HCT116 (cell line): ENCODE measurements at regions of chr11 and their contacts with region 1.

Region 1: DNA sequence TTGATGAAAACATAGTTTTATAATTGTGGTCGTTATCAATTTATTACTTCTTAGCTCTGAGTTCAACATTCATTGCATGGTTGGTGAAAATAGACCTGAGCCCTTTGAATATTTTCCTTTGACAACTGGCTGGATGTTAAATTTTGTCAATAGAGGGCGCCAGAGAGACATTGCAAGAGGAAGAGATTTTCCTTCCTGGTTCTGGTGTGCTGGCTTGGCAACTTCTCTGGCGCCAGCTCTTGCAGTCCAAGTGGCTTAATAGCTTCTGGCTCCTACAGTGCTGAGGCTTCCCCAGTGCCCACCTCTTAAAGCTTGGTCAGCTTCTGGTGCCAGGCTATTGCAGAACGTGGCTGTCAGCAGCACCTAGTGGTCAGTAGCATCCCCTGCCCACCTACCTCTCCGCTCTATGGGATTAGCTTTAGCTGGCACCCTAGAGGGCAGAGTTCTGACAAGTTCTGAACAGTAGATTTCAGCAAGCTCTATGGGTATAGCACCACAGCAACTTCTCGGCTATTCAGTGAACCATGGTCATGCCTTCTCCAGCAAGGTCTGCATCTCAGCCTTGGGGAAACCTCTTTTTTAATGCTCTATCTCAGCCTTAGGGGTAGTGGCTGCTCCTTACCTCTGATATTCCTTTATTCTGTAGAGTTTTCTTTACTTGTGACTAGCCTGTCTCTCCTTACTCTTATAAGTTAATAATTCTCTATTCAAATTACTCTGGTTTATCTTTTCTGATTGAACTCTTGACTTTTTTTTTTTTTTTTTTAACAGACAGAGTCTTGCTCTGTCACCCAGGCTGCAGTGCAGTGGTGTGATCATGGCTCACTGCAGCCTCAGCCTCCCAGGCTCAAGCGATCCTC is 59.4 kb downstream of the ACER3 start:
- DNase-seq: peak; percentile 60
- ATAC-seq: peak; percentile 87
- H3K4me3 ChIP-seq: no peak overlapping the region; a peak in 1 of 4 replicates
- H3K27ac ChIP-seq: no peak overlapping the region
- H3K4me1 ChIP-seq: peaks cover 7 to 17% of the 10 kb centered on the region in 2 experiments; a peak in 3 of 4 replicates
- H3K27me3 ChIP-seq: no peaks in the 10 kb centered on the region
- CTCF ChIP-seq: peak; percentile 86 to 98 (median 90)
- POLR2A ChIP-seq: no peak
- RAD21 ChIP-seq: peak; percentile 87

Region 2: GRCh38 chr11:76734456-76735420 is 185.4 kb before region 1 on chr11:
- CTCF ChIA-PET with region 1: interaction called, 64 read pairs
- POLR2A ChIA-PET with region 1: no interaction called
- RAD21 ChIA-PET with region 1: interaction called, 4 to 5 read pairs
- intact Hi-C with region 1: loop called (anchors 1 kb)
- DNase-seq: no peak
- ATAC-seq: no peak
- H3K4me3 ChIP-seq: no peak overlapping the region
- H3K27ac ChIP-seq: no peak overlapping the region
- H3K4me1 ChIP-seq: no peaks in the 10 kb centered on the region
- H3K27me3 ChIP-seq: no peaks in the 10 kb centered on the region; the same call in 1 of the 2 replicates
- CTCF ChIP-seq: no peak
- POLR2A ChIP-seq: no peak
- RAD21 ChIP-seq: no peak

Region 3: GRCh38 chr11:76781046-76781801 is 138.9 kb before region 1 on chr11:
- CTCF ChIA-PET with region 1: no interaction called
- POLR2A ChIA-PET with region 1: no interaction called
- RAD21 ChIA-PET with region 1: no interaction called
- intact Hi-C with region 1: no loop called
- DNase-seq: no peak
- ATAC-seq: no peak
- H3K4me3 ChIP-seq: no peak overlapping the region
- H3K27ac ChIP-seq: no peak overlapping the region
- H3K4me1 ChIP-seq: peaks cover 23 to 37% of the 10 kb centered on the region in 2 experiments
- H3K27me3 ChIP-seq: no peaks in the 10 kb centered on the region
- CTCF ChIP-seq: no peak
- POLR2A ChIP-seq: no peak
- RAD21 ChIP-seq: no peak

Region 4: DNA sequence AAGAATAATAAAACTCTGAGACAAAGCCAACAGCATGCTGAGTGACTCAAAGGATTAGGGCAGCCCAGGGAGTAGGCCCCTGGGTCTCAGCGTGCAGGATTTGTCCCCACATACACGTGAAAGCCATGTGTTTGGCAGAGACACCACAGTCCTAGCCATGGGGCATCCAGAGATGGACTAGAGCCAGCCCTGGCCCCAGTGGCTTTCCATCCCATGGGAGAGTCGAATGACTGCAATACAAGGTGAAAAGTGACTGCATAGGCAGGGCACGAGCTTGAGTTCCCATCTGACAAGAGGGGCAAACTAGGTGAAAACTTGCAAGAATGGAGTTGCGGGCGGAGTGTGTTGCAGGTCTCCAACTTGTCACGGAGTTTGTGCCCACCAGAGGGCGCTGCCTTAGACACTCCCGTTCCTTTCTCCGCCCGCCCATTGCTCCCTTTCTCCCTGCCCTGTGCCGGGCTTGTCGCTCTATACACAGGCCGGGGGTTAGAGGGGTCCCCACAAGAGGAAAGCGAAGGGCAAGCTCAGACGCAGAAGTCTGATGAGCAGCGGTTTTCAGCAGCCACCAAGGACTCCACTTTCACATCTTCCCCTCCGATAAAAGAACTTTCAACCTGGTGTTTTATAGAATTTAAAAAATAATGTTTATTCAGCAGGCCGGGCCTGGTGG is 112.8 kb before region 1 on chr11:
- CTCF ChIA-PET with region 1: interaction called, 50 read pairs
- POLR2A ChIA-PET with region 1: no interaction called
- RAD21 ChIA-PET with region 1: interaction called, 4 to 6 read pairs
- intact Hi-C with region 1: loop called (anchors 1 kb)
- DNase-seq: no peak
- ATAC-seq: peak; percentile 93
- H3K4me3 ChIP-seq: no peak overlapping the region
- H3K27ac ChIP-seq: no peak overlapping the region
- H3K4me1 ChIP-seq: peaks cover 0 to 3% of the 10 kb centered on the region in 2 experiments; a peak in 2 of 4 replicates
- H3K27me3 ChIP-seq: no peaks in the 10 kb centered on the region
- CTCF ChIP-seq: peak; percentile 77 to 83 (median 82)
- POLR2A ChIP-seq: no peak
- RAD21 ChIP-seq: peak; percentile 73

Region 5: GRCh38 chr11:76888989-76889388 is 31.1 kb before region 1 on chr11:
- CTCF ChIA-PET with region 1: interaction called, 13 read pairs
- POLR2A ChIA-PET with region 1: no interaction called
- RAD21 ChIA-PET with region 1: no interaction called
- intact Hi-C with region 1: no loop called
- DNase-seq: no peak
- ATAC-seq: no peak
- H3K4me3 ChIP-seq: no peak overlapping the region
- H3K27ac ChIP-seq: no peak overlapping the region
- H3K4me1 ChIP-seq: peaks cover 6 to 30% of the 10 kb centered on the region in 2 experiments
- H3K27me3 ChIP-seq: no peaks in the 10 kb centered on the region
- CTCF ChIP-seq: no peak
- POLR2A ChIP-seq: no peak
- RAD21 ChIP-seq: no peak

Region 6: GRCh38 chr11:76987203-76987602 is 67.1 kb after region 1 on chr11:
- CTCF ChIA-PET with region 1: no interaction called
- POLR2A ChIA-PET with region 1: no interaction called
- RAD21 ChIA-PET with region 1: no interaction called
- intact Hi-C with region 1: no loop called
- DNase-seq: no peak
- ATAC-seq: no peak
- H3K4me3 ChIP-seq: no peak overlapping the region
- H3K27ac ChIP-seq: no peak overlapping the region
- H3K4me1 ChIP-seq: peaks cover 5 to 6% of the 10 kb centered on the region in 2 experiments; a peak in 3 of 4 replicates
- H3K27me3 ChIP-seq: no peaks in the 10 kb centered on the region
- CTCF ChIP-seq: no peak
- POLR2A ChIP-seq: no peak
- RAD21 ChIP-seq: no peak

Region 7: GRCh38 chr11:77187776-77188632 is 267.9 kb after region 1 on chr11:
- CTCF ChIA-PET with region 1: interaction called, 4 read pairs
- POLR2A ChIA-PET with region 1: no interaction called
- RAD21 ChIA-PET with region 1: no interaction called
- intact Hi-C with region 1: loop called (anchors 10 kb)
- DNase-seq: peak; percentile 54
- ATAC-seq: peak; percentile 54
- H3K4me3 ChIP-seq: no peak overlapping the region
- H3K27ac ChIP-seq: no peak overlapping the region
- H3K4me1 ChIP-seq: peaks cover 0 to 14% of the 10 kb centered on the region in 2 experiments; a peak in 3 of 4 replicates
- H3K27me3 ChIP-seq: no peaks in the 10 kb centered on the region
- CTCF ChIP-seq: peak; percentile 95 to 98 (median 96)
- POLR2A ChIP-seq: no peak
- RAD21 ChIP-seq: peak; percentile 88